Mammary epithelial cell (primary cell): ENCODE measurements at regions of chr16 and their contacts with region 1.

Region 1: DNA sequence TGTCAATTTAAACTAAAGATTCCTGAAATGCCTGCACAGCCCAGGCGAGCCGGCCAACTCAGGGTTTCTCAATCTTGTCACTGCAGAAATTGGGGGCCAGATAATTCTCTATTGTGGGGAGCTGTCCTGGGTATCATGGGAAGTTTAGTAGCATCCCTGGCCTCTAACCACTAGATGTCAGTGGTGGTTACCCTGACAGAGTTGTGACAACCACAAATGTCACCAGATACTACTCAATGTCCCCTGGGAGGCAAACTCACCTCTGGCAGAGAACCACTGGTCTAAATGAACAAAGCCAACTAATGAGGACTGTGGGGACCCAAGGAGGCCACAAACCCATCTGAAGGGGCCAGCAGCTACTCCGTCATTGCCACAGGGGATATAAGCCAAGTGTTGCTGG is 90.9 kb downstream of the MYH11 start:
- DNase-seq: peak; percentile 24
- H3K4me3 ChIP-seq: no peak overlapping the region
- H3K27ac ChIP-seq: no peak overlapping the region
- H3K4me1 ChIP-seq: no peaks in the 10 kb centered on the region
- H3K27me3 ChIP-seq: peaks cover 2% of the 10 kb centered on the region
- CTCF ChIP-seq: peak; percentile 59 to 76

Region 2: DNA sequence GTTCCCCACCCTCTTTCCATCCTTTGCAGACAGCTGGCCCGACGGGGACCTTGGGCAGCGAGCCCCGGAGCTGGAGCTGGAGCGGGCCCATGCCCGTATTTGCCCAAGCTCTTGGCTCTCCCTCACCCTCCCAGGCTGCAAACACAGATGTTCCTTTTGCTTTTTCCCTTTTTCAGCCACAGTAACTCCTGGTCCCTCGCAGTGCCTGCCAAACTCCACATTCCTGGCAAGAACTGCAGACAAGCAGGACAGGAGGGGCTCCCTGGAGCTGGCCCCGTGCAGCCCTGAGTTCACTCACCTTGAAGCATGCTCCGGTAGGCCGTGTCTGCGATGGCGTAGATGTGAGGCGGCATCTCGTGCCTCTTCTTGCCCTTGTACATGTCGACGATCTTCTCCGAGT is 57.1 kb after region 1 on chr16:
- CTCF ChIA-PET with region 1: no interaction called
- dilution Hi-C with region 1: no loop called
- in situ Hi-C with region 1: no loop called
- intact Hi-C with region 1: loop called (anchors 1 kb)
- DNase-seq: no peak
- H3K4me3 ChIP-seq: no peak overlapping the region
- H3K27ac ChIP-seq: no peak overlapping the region
- H3K4me1 ChIP-seq: no peaks in the 10 kb centered on the region
- H3K27me3 ChIP-seq: no peaks in the 10 kb centered on the region
- CTCF ChIP-seq: no peak

Region 3: GRCh38 chr16:15888072-15888976 is 122.4 kb after region 1 on chr16 and contains the start of gene CEP20:
- CTCF ChIA-PET with region 1: no interaction called
- dilution Hi-C with region 1: no loop called
- in situ Hi-C with region 1: no loop called
- intact Hi-C with region 1: no loop called
- DNase-seq: peak; percentile 98
- H3K4me3 ChIP-seq: peak within 1 kb of the TSS; percentile 72 to 99 (median 97)
- H3K27ac ChIP-seq: peak within 1 kb of the TSS; percentile 85
- H3K4me1 ChIP-seq: peaks cover 15% of the 10 kb centered on the region
- H3K27me3 ChIP-seq: no peaks in the 10 kb centered on the region
- CTCF ChIP-seq: peak in 1 of 2 donors; percentile 22
- total RNA-seq, gene CEP20: 40.1 to 45.8 TPM

Region 4: GRCh38 chr16:16191493-16192167 is 425.8 kb after region 1 on chr16:
- CTCF ChIA-PET with region 1: no interaction called
- dilution Hi-C with region 1: no loop called
- in situ Hi-C with region 1: loop called in 1 of 2 experiments (anchors 10 kb)
- intact Hi-C with region 1: loop called (anchors 2 kb)
- DNase-seq: no peak
- H3K4me3 ChIP-seq: no peak overlapping the region
- H3K27ac ChIP-seq: no peak overlapping the region
- H3K4me1 ChIP-seq: no peaks in the 10 kb centered on the region
- H3K27me3 ChIP-seq: no peaks in the 10 kb centered on the region
- CTCF ChIP-seq: no peak